Activated CD4-positive, alpha-beta T cell treated with anti-CD3 and anti-CD28 coated beads for 36 hours (primary cell): ENCODE measurements at regions of chr13 and their contacts with region 1.

Region 1: GRCh38 chr13:21476893-21477472 is 17.9 kb upstream of the ZDHHC20 start:
- DNase-seq: peak; percentile 91
- ATAC-seq: peak; percentile 96
- H3K4me3 Mint-ChIP-seq: peak overlapping the region; percentile 78
- H3K27ac Mint-ChIP-seq: peak overlapping the region; percentile 52
- H3K4me1 Mint-ChIP-seq: peaks cover 8% of the 10 kb centered on the region
- H3K27me3 Mint-ChIP-seq: no peaks in the 10 kb centered on the region

Region 2: DNA sequence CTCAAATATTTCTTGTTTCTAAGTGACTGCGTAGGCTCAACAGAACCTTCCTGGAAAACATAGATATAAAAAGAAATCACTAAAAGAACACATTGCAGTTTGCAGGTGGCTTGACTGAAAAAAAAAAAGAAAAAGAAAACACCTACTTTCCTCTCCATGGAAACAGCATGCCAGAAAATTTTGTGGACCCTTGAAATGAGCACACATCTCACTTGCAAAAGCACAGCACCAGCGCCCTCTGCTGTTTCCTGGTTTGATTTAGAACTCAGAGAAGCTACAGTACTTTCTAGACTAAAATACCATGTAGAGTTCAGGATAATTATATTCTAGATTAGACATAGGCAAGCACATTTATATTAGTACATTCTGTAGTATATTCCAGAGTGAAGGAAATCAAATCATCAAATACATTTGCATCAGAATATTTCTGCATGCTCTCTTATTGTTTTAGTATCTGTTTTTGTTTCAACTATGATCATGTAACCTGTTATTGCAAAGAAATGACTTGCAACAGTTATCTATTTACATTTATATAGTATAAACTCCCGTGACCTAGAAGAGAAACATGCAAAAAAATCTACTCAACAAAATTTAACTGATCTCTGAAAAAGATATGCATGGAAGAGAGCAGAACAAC is 552.1 kb before region 1 on chr13:
- CTCF ChIA-PET with region 1: no interaction called
- POLR2A ChIA-PET with region 1: no interaction called
- intact Hi-C with region 1: no loop called
- DNase-seq: peak; percentile 88
- ATAC-seq: peak; percentile 42
- H3K4me3 Mint-ChIP-seq: no peak overlapping the region
- H3K27ac Mint-ChIP-seq: no peak overlapping the region
- H3K4me1 Mint-ChIP-seq: no peaks in the 10 kb centered on the region
- H3K27me3 Mint-ChIP-seq: no peaks in the 10 kb centered on the region

Region 3: DNA sequence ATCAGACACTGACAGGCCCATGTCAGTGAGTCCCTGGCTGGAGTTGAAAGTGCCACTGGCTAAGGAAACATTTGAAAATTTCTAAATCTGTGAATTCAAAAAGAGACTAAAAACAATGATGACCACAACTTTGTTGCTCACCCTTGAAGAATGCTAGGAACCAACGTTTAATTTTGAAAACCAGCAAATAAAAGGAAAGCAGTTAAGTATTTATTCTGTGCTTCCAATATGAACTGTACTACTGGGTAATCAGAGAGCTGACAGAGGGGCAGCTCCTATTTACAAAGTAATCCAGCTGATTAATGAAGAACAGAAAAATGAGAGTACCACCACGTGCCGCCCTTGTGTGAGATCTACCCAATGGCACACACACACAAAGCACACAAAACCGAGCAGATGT is 370.9 kb before region 1 on chr13:
- CTCF ChIA-PET with region 1: interaction called, 7 read pairs
- POLR2A ChIA-PET with region 1: no interaction called
- intact Hi-C with region 1: loop called (anchors 1 kb)
- DNase-seq: no peak
- ATAC-seq: no peak
- H3K4me3 Mint-ChIP-seq: no peak overlapping the region
- H3K27ac Mint-ChIP-seq: no peak overlapping the region
- H3K4me1 Mint-ChIP-seq: peaks cover 3% of the 10 kb centered on the region
- H3K27me3 Mint-ChIP-seq: no peaks in the 10 kb centered on the region

Region 4: DNA sequence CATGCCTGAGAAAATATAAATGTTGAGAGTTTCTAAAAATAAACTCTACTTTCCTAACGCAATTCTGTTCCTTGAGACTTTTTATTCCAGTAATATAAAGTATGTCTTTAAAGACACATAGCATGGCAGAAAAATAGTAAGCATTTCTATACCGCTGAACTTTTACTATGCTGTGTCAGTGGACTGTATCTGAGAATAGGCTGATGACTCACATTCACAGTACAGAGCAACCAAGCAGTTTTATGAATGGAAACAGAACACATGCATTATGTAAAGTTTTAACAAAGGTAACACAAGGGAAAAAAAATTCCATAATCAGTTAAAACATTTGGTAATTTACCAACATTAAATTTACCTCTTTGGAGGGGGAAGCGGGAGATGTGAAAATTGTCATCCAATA is 56.3 kb before region 1 on chr13:
- CTCF ChIA-PET with region 1: interaction called, 11 read pairs
- POLR2A ChIA-PET with region 1: no interaction called
- intact Hi-C with region 1: no loop called
- DNase-seq: no peak
- ATAC-seq: peak; percentile 75
- H3K4me3 Mint-ChIP-seq: no peak overlapping the region
- H3K27ac Mint-ChIP-seq: no peak overlapping the region
- H3K4me1 Mint-ChIP-seq: peaks cover 15% of the 10 kb centered on the region
- H3K27me3 Mint-ChIP-seq: no peaks in the 10 kb centered on the region